Ovary (tissue), 10 donors: ENCODE measurements at regions of chr9 and their contacts with region 1.

Region 1: GRCh38 chr9:136109351-136110081 is 9.2 kb downstream of the TMEM250 start:
- DNase-seq: peak; percentile 92 to 95 (median 94)
- H3K4me3 ChIP-seq: peak overlapping the region; percentile 30
- H3K27ac ChIP-seq: peak overlapping the region in 1 of 2 donors; percentile 39
- H3K4me1 ChIP-seq: peaks cover 17% of the 10 kb centered on the region
- H3K27me3 ChIP-seq: no peaks in the 10 kb centered on the region
- CTCF ChIP-seq: no peak
- EP300 ChIP-seq: no peak
- POLR2A ChIP-seq: no peak

Region 2: DNA sequence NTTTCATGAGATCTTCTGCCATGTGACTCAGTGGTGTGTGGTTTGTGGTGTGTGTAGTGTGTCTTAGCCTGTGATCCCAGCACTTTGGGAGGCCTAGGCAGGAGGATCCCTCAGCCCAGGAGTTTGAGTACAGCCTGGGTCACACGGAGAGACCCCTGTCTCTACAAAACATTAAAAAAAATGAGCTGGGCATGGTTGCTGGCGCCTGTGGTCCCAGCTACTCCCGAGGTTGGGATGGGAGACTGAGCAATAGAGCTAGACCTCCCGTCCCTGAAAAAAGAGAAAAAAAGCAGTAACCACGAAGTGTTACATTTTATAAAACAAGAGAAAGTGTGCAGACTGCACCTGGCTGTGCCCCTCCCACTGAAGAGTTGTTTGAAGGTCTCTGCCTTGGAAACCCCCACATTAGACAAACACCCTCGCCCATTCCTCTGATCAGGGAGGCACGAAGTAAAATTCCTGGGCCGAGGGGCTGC is 1923.9 kb before region 1 on chr9:
- intact Hi-C with region 1: loop called in 1 of 4 experiments (anchors 10 kb)
- DNase-seq: peak in 4 of 5 donors; percentile 12 to 36 (median 21)
- H3K4me3 ChIP-seq: no peak overlapping the region
- H3K27ac ChIP-seq: peak overlapping the region in 1 of 2 donors; percentile 76
- H3K4me1 ChIP-seq: peaks cover 25% of the 10 kb centered on the region
- H3K27me3 ChIP-seq: no peaks in the 10 kb centered on the region
- CTCF ChIP-seq: no peak
- EP300 ChIP-seq: no peak
- POLR2A ChIP-seq: no peak